CD4-positive, alpha-beta memory T cell (primary cell): ENCODE measurements at regions of chr4 and their contacts with region 1.

Region 1: GRCh38 chr4:151362404-151363164 is 37.2 kb upstream of the SH3D19 start:
- DNase-seq: peak; percentile 72 to 77 (median 75)
- H3K4me3 ChIP-seq: no peak overlapping the region
- H3K4me3 Mint-ChIP-seq: peak overlapping the region in 1 of 8 donors; percentile 20
- H3K27ac ChIP-seq: no peak overlapping the region
- H3K27ac Mint-ChIP-seq: no peak overlapping the region
- H3K4me1 ChIP-seq: no peaks in the 10 kb centered on the region
- H3K4me1 Mint-ChIP-seq: peaks cover 0 to 5% (median 4%) of the 10 kb centered on the region in 4 donors
- H3K27me3 ChIP-seq: no peaks in the 10 kb centered on the region
- H3K27me3 Mint-ChIP-seq: peaks cover 2 to 7% of the 10 kb centered on the region in 2 donors

Region 2: DNA sequence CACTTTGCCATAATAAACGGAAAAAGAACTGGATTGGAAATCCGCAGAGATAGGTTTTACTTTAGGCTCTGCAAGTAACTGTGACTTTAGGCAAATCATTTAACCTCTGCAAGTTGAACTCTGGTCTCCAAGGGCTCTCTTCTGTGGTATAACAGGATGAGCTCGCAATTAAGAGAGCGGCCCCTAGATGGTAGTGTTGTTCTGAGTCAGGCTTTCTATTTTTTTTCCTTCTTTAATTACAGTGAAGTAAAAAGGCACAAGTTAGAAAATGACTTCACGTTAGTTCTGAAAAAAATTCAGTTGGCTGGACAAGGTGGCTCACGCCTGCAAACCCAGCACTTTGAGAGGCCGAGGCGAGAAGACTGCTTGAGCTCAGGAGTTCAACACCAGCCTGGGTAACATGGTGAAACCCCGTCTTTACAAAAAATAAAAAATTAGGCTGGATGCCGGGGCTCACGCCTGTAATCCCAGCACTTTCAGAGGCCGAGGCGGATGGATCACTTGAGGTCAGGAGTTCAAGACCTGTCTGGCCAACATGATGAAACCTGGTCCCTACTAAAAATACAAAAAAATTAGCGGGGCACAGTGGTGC is 245.1 kb before region 1 on chr4:
- CTCF ChIA-PET with region 1: no interaction called
- POLR2A ChIA-PET with region 1: no interaction called
- intact Hi-C with region 1: loop called (anchors 5 kb)
- DNase-seq: peak; percentile 37 to 49 (median 45)
- H3K4me3 ChIP-seq: no peak overlapping the region
- H3K4me3 Mint-ChIP-seq: no peak overlapping the region
- H3K27ac ChIP-seq: no peak overlapping the region
- H3K27ac Mint-ChIP-seq: no peak overlapping the region
- H3K4me1 ChIP-seq: no peaks in the 10 kb centered on the region
- H3K4me1 Mint-ChIP-seq: peaks cover 0 to 4% (median 2%) of the 10 kb centered on the region in 4 donors
- H3K27me3 ChIP-seq: no peaks in the 10 kb centered on the region
- H3K27me3 Mint-ChIP-seq: no peaks in the 10 kb centered on the region

Region 3: DNA sequence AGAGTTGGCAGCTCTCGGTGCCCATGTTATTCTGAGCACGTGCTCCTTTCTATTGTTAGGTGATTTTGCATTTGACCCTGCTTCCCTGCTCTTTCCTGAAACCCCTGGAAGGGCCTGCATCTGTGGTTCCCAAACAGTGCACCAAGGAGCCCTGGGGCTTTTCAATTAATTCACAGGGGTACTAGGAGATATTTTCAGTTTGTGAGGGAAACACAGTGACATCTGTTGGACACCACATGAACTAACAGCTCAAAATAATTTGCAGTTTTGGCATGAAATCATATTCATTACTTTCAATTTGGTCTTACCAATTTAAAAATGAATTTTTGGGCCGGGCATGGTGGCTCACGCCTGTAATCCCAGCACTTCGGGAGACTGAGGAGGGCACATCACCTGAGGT is 241.7 kb after region 1 on chr4:
- CTCF ChIA-PET with region 1: no interaction called
- POLR2A ChIA-PET with region 1: no interaction called
- intact Hi-C with region 1: loop called (anchors 10 kb)
- DNase-seq: no peak
- H3K4me3 ChIP-seq: no peak overlapping the region
- H3K4me3 Mint-ChIP-seq: no peak overlapping the region
- H3K27ac ChIP-seq: no peak overlapping the region
- H3K27ac Mint-ChIP-seq: no peak overlapping the region
- H3K4me1 ChIP-seq: no peaks in the 10 kb centered on the region
- H3K4me1 Mint-ChIP-seq: peaks cover 0 to 3% (median under 1%) of the 10 kb centered on the region in 4 donors
- H3K27me3 ChIP-seq: no peaks in the 10 kb centered on the region
- H3K27me3 Mint-ChIP-seq: peaks cover 0 to 2% of the 10 kb centered on the region in 2 donors

Region 4: DNA sequence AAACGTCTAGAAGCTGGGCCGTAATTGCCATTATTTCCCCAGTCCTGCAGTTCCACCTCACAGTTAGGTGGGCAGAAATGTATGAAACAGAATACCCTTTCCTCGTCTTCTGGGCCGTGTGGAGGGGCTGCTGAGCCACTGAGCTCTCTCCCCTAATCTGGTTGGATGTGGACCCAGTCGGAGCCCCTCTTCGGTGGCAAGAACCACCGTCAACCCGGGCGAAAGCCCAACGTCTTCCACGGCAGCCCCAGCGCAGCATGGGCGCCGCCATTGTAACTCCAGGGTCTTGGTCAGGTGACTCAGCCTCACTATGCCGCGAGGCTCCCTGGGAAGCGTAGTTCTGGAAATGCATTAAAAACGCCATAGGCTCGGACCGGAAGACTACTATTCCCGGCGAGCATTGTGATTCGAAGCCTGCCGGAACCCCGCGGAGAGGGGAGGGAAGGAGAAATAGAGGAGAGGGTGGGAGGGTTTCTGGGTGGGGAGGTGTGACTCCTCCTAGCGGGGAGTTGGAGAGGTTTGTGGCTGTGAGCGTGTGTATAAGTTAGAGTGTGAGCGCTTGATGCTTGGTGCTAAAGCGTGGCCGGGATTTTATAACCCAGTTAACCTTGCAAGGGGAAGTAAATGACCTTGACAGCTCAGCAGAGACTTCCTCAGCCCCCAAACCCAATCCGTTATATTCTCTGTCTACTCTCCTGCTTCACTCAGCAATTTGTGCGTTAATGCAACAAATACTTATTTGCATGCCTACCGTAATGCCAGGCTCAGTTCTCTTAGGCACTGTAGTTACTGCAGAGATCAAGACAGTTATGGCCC is 398.3 kb after region 1 on chr4 and contains the start of gene GATB:
- CTCF ChIA-PET with region 1: no interaction called
- POLR2A ChIA-PET with region 1: no interaction called
- intact Hi-C with region 1: loop called (anchors 5 kb)
- DNase-seq: peak; percentile 91 to 97 (median 93)
- H3K4me3 ChIP-seq: peak within 1 kb of the TSS; percentile 77 to 84
- H3K4me3 Mint-ChIP-seq: peak within 1 kb of the TSS; percentile 96 to 100 (median 98)
- H3K27ac ChIP-seq: peak within 1 kb of the TSS; percentile 60
- H3K27ac Mint-ChIP-seq: peak within 1 kb of the TSS; percentile 87 to 98 (median 97)
- H3K4me1 ChIP-seq: peaks cover 13% of the 10 kb centered on the region
- H3K4me1 Mint-ChIP-seq: peaks cover 13 to 19% (median 17%) of the 10 kb centered on the region in 4 donors
- H3K27me3 ChIP-seq: no peaks in the 10 kb centered on the region
- H3K27me3 Mint-ChIP-seq: peaks cover under 1 to 1% of the 10 kb centered on the region in 2 donors
- total RNA-seq, gene GATB: 10.8 to 12.5 TPM

Region 5: DNA sequence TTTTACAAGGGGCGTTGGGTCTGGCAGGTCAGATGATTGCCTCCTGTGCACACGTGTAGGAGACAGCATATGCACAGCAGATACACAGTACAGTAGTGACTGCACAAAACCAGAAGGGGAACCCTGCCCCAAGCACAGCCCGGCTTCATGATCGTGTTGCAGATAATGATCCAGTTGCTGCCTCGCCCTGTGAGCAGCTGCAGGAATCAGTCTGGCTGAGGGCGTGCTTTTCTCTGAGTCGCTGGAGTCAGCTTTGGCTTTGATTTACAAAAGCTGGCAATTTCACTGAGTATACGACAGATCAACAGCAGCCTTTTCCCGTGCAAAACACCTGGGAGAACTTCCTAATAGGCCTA is 701.3 kb after region 1 on chr4:
- CTCF ChIA-PET with region 1: no interaction called
- POLR2A ChIA-PET with region 1: no interaction called
- intact Hi-C with region 1: loop called (anchors 5 kb)
- DNase-seq: peak; percentile 61 to 73 (median 70)
- H3K4me3 ChIP-seq: no peak overlapping the region
- H3K4me3 Mint-ChIP-seq: peak overlapping the region in 7 of 8 donors; percentile 23 to 72 (median 51)
- H3K27ac ChIP-seq: no peak overlapping the region
- H3K27ac Mint-ChIP-seq: peak overlapping the region; percentile 32 to 82 (median 63)
- H3K4me1 ChIP-seq: peaks cover 44% of the 10 kb centered on the region
- H3K4me1 Mint-ChIP-seq: peaks cover 32 to 60% (median 40%) of the 10 kb centered on the region in 4 donors
- H3K27me3 ChIP-seq: no peaks in the 10 kb centered on the region
- H3K27me3 Mint-ChIP-seq: no peaks in the 10 kb centered on the region

Region 6: GRCh38 chr4:152369902-152370295 is 1007.3 kb after region 1 on chr4:
- CTCF ChIA-PET with region 1: no interaction called
- POLR2A ChIA-PET with region 1: no interaction called
- intact Hi-C with region 1: loop called (anchors 1 kb)
- DNase-seq: peak in 2 of 5 donors; percentile 13 to 22
- H3K4me3 ChIP-seq: no peak overlapping the region
- H3K4me3 Mint-ChIP-seq: no peak overlapping the region
- H3K27ac ChIP-seq: no peak overlapping the region
- H3K27ac Mint-ChIP-seq: no peak overlapping the region
- H3K4me1 ChIP-seq: peaks cover 5% of the 10 kb centered on the region
- H3K4me1 Mint-ChIP-seq: peaks cover 11 to 23% (median 14%) of the 10 kb centered on the region in 4 donors
- H3K27me3 ChIP-seq: no peaks in the 10 kb centered on the region
- H3K27me3 Mint-ChIP-seq: no peaks in the 10 kb centered on the region

Region 7: DNA sequence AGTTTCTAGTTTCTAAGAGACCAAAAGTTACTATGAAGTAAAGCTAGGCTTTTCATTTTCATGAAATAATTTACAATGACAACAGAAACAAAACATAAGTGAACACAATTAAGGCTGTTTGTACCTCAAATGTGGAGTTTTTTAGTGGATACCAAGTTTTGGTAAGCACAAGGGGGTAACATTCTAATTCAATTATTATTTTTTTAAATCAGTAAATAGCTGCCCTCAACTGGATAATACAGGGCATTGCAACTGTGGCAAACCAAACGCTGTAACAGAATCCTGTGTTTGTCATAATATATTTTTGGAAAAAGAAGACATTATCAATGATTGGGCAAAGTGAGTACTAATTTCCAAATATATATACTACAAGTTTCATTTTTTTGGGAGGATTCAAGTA is 1023.0 kb after region 1 on chr4:
- CTCF ChIA-PET with region 1: interaction called, 5 read pairs
- POLR2A ChIA-PET with region 1: no interaction called
- intact Hi-C with region 1: loop called (anchors 1 kb)
- DNase-seq: peak in 1 of 5 donors; percentile 20
- H3K4me3 ChIP-seq: no peak overlapping the region
- H3K4me3 Mint-ChIP-seq: no peak overlapping the region
- H3K27ac ChIP-seq: no peak overlapping the region
- H3K27ac Mint-ChIP-seq: no peak overlapping the region
- H3K4me1 ChIP-seq: peaks cover 11% of the 10 kb centered on the region
- H3K4me1 Mint-ChIP-seq: peaks cover 22 to 42% (median 27%) of the 10 kb centered on the region in 4 donors
- H3K27me3 ChIP-seq: no peaks in the 10 kb centered on the region
- H3K27me3 Mint-ChIP-seq: no peaks in the 10 kb centered on the region